ENCODE measurements at regions of chr9 and their contacts with region 1.

Region 1: GRCh38 chr9:98168941-98169488 is 23.4 kb downstream of the CORO2A start:
- DNase-seq: peak; percentile 50 to 59
- H3K4me3 ChIP-seq: no peak overlapping the region
- H3K27ac ChIP-seq: peak overlapping the region; percentile 20; the same call in 1 of the 2 replicates
- H3K4me1 ChIP-seq: peaks cover 35% of the 10 kb centered on the region
- H3K27me3 ChIP-seq: no peaks in the 10 kb centered on the region
- CTCF ChIP-seq: no peak

Region 2: GRCh38 chr9:98154648-98155047 is 14.4 kb before region 1 on chr9:
- CTCF ChIA-PET with region 1: no interaction called
- POLR2A ChIA-PET with region 1: no interaction called
- intact Hi-C with region 1: loop called (anchors 2 kb)
- DNase-seq: peak in 1 of 2 experiments; percentile 91
- H3K4me3 ChIP-seq: no peak overlapping the region
- H3K27ac ChIP-seq: peak overlapping the region; percentile 47
- H3K4me1 ChIP-seq: peaks cover 33% of the 10 kb centered on the region
- H3K27me3 ChIP-seq: no peaks in the 10 kb centered on the region
- CTCF ChIP-seq: no peak

Measured in PC-9 (cell line).